ENCODE measurements at regions of chr16 and their contacts with region 1.

Region 1: DNA sequence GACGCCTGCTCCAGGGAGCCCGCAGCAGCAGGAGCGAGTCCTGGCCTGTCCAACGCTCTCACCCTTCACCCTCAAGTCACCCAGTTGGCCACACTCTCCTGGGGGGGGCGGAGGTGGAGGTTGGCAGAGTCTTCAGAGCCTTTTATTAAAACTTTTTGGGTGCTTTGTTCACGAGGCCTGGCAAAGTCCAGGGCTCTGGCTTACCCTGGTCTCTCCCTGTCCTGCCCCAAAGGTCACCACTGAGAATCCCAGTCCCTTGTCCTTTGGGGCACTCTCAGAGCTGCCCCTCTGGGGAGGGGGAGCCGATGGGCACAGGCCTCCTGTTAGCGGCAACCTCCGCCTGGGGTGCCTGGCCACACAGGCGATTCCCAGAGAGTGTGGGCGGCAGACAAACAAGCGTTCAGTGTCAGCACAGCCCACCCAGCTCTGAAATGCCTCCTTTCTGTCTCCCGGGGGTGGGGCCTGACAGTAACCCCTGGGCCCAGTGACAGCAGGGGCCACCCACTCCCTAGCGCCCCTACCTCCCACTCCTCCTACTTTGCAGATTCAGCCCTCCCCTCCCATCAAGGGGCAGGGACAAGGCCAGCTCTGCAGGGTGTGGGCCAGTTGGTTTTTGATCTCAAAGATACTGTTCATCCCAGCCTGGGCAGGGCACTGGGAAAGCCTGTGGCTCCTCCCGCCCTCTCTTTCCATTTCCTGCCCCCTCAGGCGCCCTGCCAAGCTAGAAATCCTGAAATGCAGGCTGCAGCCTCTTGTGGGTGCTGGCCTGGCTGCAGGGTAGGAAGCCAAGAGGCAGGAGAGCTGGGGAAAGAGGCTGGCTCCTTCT is 36.5 kb upstream of the EMP2 start:
- DNase-seq: peak in 1 of 2 experiments; percentile 63
- H3K4me3 ChIP-seq: peak overlapping the region in 2 of 4 experiments; percentile 5 to 30; a peak in 3 of 8 replicates
- H3K27ac ChIP-seq: no peak overlapping the region
- H3K4me1 ChIP-seq: peaks cover 15 to 33% (median 23%) of the 10 kb centered on the region in 4 experiments
- H3K27me3 ChIP-seq: peaks cover 0 to 6% (median 3%) of the 10 kb centered on the region in 4 experiments; a peak in 3 of 7 replicates
- CTCF ChIP-seq: no peak
- EP300 ChIP-seq: no peak
- POLR2A ChIP-seq: no peak
- RAD21 ChIP-seq: no peak; a peak in 1 of 4 replicates

Region 2: DNA sequence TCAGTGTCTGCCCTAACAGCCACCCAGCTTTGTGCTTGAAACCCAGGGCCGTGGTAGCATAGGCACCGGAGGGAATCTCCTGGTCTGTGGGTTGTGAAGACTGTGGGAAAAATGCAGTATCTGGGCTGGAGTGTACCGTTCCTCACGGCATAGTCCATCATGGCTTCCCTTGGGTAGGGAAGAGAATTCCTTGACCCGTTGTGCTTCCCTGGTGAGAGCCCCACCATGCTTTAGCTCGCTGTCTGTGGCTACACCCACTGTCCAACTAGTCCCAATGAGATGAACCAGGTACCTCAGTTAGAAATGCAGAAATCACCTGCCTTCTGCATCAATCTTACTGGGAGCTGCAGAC is 163.8 kb before region 1 on chr16:
- CTCF ChIA-PET with region 1: no interaction called
- POLR2A ChIA-PET with region 1: no interaction called
- DNase-seq: no peak
- H3K4me3 ChIP-seq: no peak overlapping the region
- H3K27ac ChIP-seq: no peak overlapping the region
- H3K4me1 ChIP-seq: no peaks in the 10 kb centered on the region
- H3K27me3 ChIP-seq: no peaks in the 10 kb centered on the region
- CTCF ChIP-seq: no peak
- EP300 ChIP-seq: no peak
- POLR2A ChIP-seq: no peak
- RAD21 ChIP-seq: no peak

Region 3: DNA sequence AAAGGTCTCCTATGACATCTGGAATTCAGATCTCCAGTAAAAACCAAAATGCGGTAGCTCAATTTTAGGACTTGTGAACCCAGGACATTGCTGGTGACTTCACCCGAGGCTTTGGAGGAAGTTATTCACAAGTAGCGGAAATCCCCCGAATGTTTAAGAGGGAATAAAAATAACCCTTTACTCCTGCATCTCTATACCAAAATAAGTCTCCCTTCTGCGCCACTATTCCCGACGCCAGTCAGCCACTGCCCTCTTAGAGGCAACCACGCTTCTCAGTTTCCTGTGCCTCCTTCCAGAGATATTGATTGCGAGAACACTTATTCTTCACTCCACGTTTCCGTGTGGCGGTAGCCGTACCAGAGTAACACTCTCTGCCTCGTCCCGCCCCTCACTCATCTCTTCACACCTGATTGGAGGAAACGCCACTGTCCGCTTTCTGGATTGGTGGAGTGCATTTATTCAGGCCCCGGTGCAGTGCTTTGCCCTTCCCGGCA is 63.9 kb before region 1 on chr16:
- CTCF ChIA-PET with region 1: no interaction called
- POLR2A ChIA-PET with region 1: no interaction called
- DNase-seq: peak in 1 of 2 experiments; percentile 77
- H3K4me3 ChIP-seq: no peak overlapping the region
- H3K27ac ChIP-seq: no peak overlapping the region
- H3K4me1 ChIP-seq: peaks cover 0 to 4% (median 0%) of the 10 kb centered on the region in 4 experiments; a peak in 2 of 7 replicates
- H3K27me3 ChIP-seq: no peaks in the 10 kb centered on the region
- CTCF ChIP-seq: no peak
- EP300 ChIP-seq: no peak
- POLR2A ChIP-seq: no peak
- RAD21 ChIP-seq: no peak

Region 4: GRCh38 chr16:10579965-10580882 is 36.7 kb before region 1 on chr16 and contains the start of gene EMP2:
- CTCF ChIA-PET with region 1: interaction called, 16 read pairs
- POLR2A ChIA-PET with region 1: no interaction called
- DNase-seq: peak; percentile 31 to 90
- H3K4me3 ChIP-seq: peak within 1 kb of the TSS; percentile 41 to 85 (median 62)
- H3K27ac ChIP-seq: peak within 1 kb of the TSS; percentile 33; the same call in 1 of the 2 replicates
- H3K4me1 ChIP-seq: peaks cover 15 to 39% (median 22%) of the 10 kb centered on the region in 4 experiments
- H3K27me3 ChIP-seq: no peaks in the 10 kb centered on the region
- CTCF ChIP-seq: peak; percentile 77 to 80 (median 79)
- EP300 ChIP-seq: 0 out of 3 replicates have a peak, but pooled peaks of 1 of the 2 experiments have one; percentile 49
- POLR2A ChIP-seq: peak in 1 of 2 experiments; percentile 51; a peak in 1 of 3 replicates
- RAD21 ChIP-seq: peak; percentile 63 to 75
- total RNA-seq, gene EMP2: 21.8 and 22.6 TPM in 2 replicates

Region 5: GRCh38 chr16:10629587-10629963 is 12.6 kb after region 1 on chr16:
- CTCF ChIA-PET with region 1: interaction called, 19 read pairs
- POLR2A ChIA-PET with region 1: interaction called, 3 read pairs
- DNase-seq: peak in 1 of 2 experiments; percentile 59
- H3K4me3 ChIP-seq: no peak overlapping the region
- H3K27ac ChIP-seq: no peak overlapping the region
- H3K4me1 ChIP-seq: peaks cover 0 to 2% (median 0%) of the 10 kb centered on the region in 4 experiments; a peak in 1 of 7 replicates
- H3K27me3 ChIP-seq: no peaks in the 10 kb centered on the region; a peak in 1 of 7 replicates
- CTCF ChIP-seq: peak; percentile 47 to 71 (median 67)
- EP300 ChIP-seq: no peak
- POLR2A ChIP-seq: no peak
- RAD21 ChIP-seq: peak; percentile 28 to 58

Region 6: GRCh38 chr16:10657925-10658324 is 41.0 kb after region 1 on chr16:
- CTCF ChIA-PET with region 1: no interaction called
- POLR2A ChIA-PET with region 1: no interaction called
- DNase-seq: no peak
- H3K4me3 ChIP-seq: no peak overlapping the region
- H3K27ac ChIP-seq: no peak overlapping the region
- H3K4me1 ChIP-seq: peaks cover 2 to 5% (median 2%) of the 10 kb centered on the region in 4 experiments; a peak in 6 of 7 replicates
- H3K27me3 ChIP-seq: no peaks in the 10 kb centered on the region
- CTCF ChIP-seq: no peak
- EP300 ChIP-seq: no peak
- POLR2A ChIP-seq: no peak
- RAD21 ChIP-seq: no peak

Region 7: DNA sequence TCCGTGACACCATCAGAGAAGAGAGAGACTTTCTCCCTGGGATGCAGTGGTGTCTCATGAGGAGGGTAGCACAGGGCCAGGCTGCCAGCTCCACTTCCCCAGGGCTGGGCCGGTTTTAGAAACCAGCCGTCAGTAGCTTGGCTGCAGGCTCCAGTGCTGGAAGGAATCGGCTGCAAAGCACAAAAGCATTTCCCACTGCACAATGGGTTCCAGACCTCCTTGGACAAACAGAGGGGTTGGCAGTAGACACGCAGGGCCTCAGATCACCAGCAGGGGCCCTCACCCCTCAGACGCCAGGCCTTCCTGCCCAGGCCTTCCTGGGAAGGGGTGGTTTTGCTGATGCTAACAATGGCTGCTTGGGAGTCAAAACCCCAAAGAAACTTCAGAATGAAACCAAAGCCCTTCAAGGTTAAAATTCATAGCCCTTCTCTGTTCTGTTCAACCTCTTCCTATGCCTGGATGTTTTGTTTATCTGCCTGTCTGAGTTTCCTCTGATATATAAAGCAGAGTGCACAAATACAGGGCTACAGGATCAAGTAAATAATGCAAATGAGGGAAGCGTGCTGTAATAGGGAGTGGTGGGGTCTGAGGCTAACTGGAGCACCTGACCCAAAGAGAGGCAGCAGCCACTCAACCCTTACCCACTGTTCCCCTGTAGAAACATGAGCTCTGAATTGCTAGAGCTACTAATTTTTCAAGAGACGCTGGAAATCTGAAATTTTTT is 51.5 kb after region 1 on chr16:
- CTCF ChIA-PET with region 1: interaction called, 11 read pairs
- POLR2A ChIA-PET with region 1: no interaction called
- DNase-seq: peak in 1 of 2 experiments; percentile 57
- H3K4me3 ChIP-seq: no peak overlapping the region
- H3K27ac ChIP-seq: no peak overlapping the region
- H3K4me1 ChIP-seq: peaks cover 0 to 3% (median under 1%) of the 10 kb centered on the region in 4 experiments; a peak in 3 of 7 replicates
- H3K27me3 ChIP-seq: no peaks in the 10 kb centered on the region
- CTCF ChIP-seq: peak; percentile 57 to 80 (median 79)
- EP300 ChIP-seq: no peak
- POLR2A ChIP-seq: no peak
- RAD21 ChIP-seq: peak; percentile 54 to 57